HCT116 (cell line): ENCODE measurements at regions of chr1 and their contacts with region 1.

Region 1: GRCh38 chr1:228073857-228074545 is 8.5 kb upstream of the ARF1 start:
- DNase-seq: no peak
- ATAC-seq: peak; percentile 57
- H3K4me3 ChIP-seq: no peak overlapping the region
- H3K27ac ChIP-seq: no peak overlapping the region
- H3K4me1 ChIP-seq: no peaks in the 10 kb centered on the region; a peak in 1 of 4 replicates
- H3K27me3 ChIP-seq: no peaks in the 10 kb centered on the region
- CTCF ChIP-seq: peak in 1 of 3 experiments; percentile 27; a peak in 1 of 6 replicates
- POLR2A ChIP-seq: no peak
- RAD21 ChIP-seq: no peak; the same call in 1 of the 2 replicates

Region 2: DNA sequence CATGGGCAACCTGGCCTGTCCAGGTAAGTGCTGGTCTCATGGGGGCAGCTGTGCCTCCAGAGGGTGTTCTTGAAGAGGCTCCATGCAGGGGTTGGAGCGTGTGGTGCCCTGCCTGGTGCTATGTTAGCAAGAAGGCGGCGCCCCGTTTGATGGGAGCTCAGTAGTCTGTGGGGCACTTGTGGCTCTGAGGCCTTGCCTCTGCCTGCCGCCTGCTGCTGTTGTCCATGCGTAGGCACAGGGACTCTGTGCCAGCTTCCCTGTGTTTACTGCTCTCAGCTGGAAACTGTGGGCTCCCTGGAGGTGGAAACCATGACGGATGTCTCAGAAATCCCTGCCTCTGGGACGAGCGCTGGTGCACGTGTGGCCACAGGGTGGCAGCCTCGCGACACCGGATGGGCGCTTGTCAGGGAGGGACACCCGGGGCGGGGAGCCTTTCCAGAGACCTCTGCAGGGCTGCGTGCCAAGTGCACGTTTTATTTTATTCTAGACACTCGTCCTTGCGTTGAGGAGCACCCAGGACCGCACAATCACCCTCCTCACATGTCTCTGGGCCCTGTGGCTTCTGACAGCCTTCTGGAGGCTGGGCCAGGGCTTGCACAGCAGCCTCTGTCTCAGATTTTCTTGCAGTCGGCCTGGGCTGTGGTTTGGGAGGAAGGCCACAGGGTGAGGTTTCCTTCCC is 311.6 kb before region 1 on chr1:
- CTCF ChIA-PET with region 1: no interaction called
- POLR2A ChIA-PET with region 1: no interaction called
- RAD21 ChIA-PET with region 1: no interaction called
- intact Hi-C with region 1: loop called (anchors 10 kb)
- DNase-seq: peak; percentile 57
- ATAC-seq: peak; percentile 95
- H3K4me3 ChIP-seq: no peak overlapping the region
- H3K27ac ChIP-seq: no peak overlapping the region; the same call in 1 of the 2 replicates
- H3K4me1 ChIP-seq: peaks cover 3 to 18% of the 10 kb centered on the region in 2 experiments; a peak in 2 of 4 replicates
- H3K27me3 ChIP-seq: no peaks in the 10 kb centered on the region
- CTCF ChIP-seq: peak; percentile 90 to 95 (median 93)
- POLR2A ChIP-seq: no peak
- RAD21 ChIP-seq: peak; percentile 99

Region 3: GRCh38 chr1:228131766-228132165 is 57.8 kb after region 1 on chr1:
- CTCF ChIA-PET with region 1: no interaction called
- POLR2A ChIA-PET with region 1: no interaction called
- RAD21 ChIA-PET with region 1: no interaction called
- intact Hi-C with region 1: no loop called
- DNase-seq: no peak
- ATAC-seq: no peak
- H3K4me3 ChIP-seq: no peak overlapping the region
- H3K27ac ChIP-seq: 0 out of 2 replicates have a peak overlapping the region, but pooled peaks have one; percentile 6
- H3K4me1 ChIP-seq: peaks cover 7 to 18% of the 10 kb centered on the region in 2 experiments
- H3K27me3 ChIP-seq: peaks cover 3% of the 10 kb centered on the region; the same call in 1 of the 2 replicates
- CTCF ChIP-seq: no peak
- POLR2A ChIP-seq: no peak
- RAD21 ChIP-seq: no peak